WTC11 (cell line): ENCODE measurements at regions of chr10 and their contacts with region 1.

Region 1: GRCh38 chr10:6920072-6921019 is 340.3 kb upstream of the PRKCQ start:
- DNase-seq: peak; percentile 83
- ATAC-seq: peak; percentile 99
- H3K4me3 Mint-ChIP-seq: no peak overlapping the region
- H3K27ac Mint-ChIP-seq: no peak overlapping the region
- H3K4me1 Mint-ChIP-seq: peaks cover 15% of the 10 kb centered on the region
- H3K27me3 Mint-ChIP-seq: peaks cover 4% of the 10 kb centered on the region; the same call in 1 of the 2 replicates
- CTCF ChIP-seq: peak; percentile 42

Region 2: GRCh38 chr10:6748978-6749635 is 171.2 kb before region 1 on chr10:
- CTCF ChIA-PET with region 1: no interaction called
- POLR2A ChIA-PET with region 1: no interaction called
- DNase-seq: no peak
- ATAC-seq: no peak
- H3K4me3 Mint-ChIP-seq: no peak overlapping the region
- H3K27ac Mint-ChIP-seq: no peak overlapping the region
- H3K4me1 Mint-ChIP-seq: peaks cover 22% of the 10 kb centered on the region
- H3K27me3 Mint-ChIP-seq: peaks cover 15% of the 10 kb centered on the region
- CTCF ChIP-seq: no peak

Region 3: DNA sequence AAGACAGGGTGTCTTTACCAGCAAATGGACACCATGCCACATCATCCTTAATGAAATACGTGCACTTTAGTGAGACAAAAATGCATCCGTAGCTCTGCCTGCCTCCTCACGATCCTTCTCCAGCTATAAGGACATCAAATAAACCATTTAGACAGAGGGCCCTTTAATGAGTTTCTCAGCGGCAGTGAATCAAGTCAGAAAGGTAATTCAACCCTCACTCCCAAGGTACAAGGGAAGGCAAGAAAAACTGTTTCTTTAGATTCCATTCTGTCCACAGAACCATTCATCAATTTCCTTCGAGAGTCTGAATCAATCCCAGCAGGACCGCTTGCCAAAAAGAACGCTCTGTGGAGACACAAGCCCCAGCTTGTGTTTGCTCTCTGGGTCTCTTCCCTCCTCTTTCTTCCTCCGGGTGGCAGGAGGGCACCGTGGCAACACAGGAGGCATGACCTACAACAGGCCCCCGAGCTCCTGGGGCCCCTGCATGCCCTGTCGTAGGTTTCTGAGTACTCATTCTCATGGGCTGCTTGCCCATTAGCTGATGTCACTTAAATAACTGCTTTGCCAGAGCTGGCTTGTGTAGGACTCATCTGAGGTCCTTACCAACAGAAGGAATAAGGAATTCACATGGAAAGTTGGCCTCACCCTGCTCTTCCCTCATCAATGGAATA is 42.5 kb before region 1 on chr10:
- CTCF ChIA-PET with region 1: interaction called, 10 read pairs
- POLR2A ChIA-PET with region 1: no interaction called
- DNase-seq: peak; percentile 42
- ATAC-seq: peak; percentile 89
- H3K4me3 Mint-ChIP-seq: no peak overlapping the region
- H3K27ac Mint-ChIP-seq: no peak overlapping the region
- H3K4me1 Mint-ChIP-seq: peaks cover 45% of the 10 kb centered on the region
- H3K27me3 Mint-ChIP-seq: no peaks in the 10 kb centered on the region
- CTCF ChIP-seq: no peak

Region 4: DNA sequence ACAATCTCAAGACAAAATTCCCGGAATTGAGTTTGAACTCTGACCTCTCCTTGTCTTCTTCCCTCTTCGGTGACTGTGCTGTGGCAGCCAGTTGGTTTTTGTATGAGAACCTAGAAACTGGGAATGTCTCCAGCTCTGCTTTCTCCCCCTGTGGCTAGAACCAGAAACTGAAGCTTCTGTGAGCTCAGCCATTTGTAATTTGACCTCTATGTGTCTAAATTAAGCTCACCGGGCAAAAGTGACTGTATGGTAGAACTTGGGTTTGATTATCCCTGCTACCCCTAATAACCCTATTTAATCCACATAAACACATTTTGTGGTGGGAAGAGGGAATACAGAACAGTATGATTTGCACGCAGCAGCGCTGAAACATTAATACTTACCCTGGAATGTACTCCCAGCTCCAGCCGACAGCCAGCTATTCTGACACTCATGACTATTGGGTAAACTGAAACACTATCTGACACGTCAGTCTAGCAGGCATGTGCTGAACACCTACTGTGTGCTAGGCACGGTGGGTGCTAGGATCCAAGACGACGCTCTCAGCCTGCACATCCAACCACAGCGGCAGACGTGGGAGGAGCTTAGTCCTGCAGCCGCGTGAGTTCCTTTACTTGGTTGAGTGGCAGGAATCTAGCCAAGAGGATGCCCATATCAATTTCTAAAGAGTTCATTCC is 165.7 kb after region 1 on chr10:
- CTCF ChIA-PET with region 1: interaction called, 14 read pairs
- POLR2A ChIA-PET with region 1: no interaction called
- DNase-seq: peak; percentile 20
- ATAC-seq: peak; percentile 86
- H3K4me3 Mint-ChIP-seq: no peak overlapping the region
- H3K27ac Mint-ChIP-seq: peak overlapping the region; percentile 42
- H3K4me1 Mint-ChIP-seq: peaks cover 49% of the 10 kb centered on the region
- H3K27me3 Mint-ChIP-seq: peaks cover 10% of the 10 kb centered on the region
- CTCF ChIP-seq: no peak

Region 5: DNA sequence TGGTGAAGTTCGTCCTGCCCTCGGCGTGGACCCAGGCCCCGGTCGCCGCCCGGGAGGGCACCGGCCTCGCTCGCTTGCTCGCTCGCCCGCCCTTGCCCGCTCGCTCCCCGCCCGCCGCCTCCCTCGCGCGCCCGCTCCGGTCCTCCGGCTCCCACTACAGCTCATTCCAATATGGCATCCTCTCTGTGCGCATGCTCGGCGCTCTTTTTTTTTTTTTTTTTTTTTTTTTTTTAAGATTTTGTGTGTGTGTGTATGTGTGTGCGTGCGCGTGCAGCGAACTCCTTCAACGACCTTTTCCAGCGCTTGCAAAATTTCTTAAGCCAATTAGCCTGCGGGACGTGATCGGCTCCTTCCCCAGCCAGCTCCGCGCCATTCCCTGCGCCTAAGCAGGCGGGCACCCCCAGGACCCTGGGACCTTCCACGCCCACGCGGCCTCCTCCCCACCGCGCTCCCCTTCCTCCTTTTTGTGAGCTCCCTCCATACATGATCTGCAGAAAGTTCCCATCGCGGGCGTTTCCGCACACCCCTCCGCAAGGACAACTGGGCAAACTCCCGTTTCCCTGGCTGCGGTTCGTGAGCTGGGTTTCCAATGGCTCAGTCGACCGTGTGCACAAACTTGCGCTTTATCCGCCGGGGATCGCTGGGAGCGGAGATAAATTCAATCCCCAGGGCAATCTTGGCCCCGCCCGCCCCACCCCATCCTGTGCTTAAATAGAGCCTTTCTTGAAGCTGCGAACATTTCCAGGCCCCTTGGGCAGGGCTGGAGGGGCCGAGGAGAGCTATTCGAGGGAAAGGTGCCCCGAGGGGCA is 490.7 kb after region 1 on chr10 and contains the start of gene SFMBT2:
- CTCF ChIA-PET with region 1: interaction called, 26 read pairs
- POLR2A ChIA-PET with region 1: no interaction called
- DNase-seq: peak; percentile 77
- ATAC-seq: peak; percentile 16
- H3K4me3 Mint-ChIP-seq: peak within 1 kb of the TSS; percentile 92
- H3K27ac Mint-ChIP-seq: peak within 1 kb of the TSS; percentile 30; the same call in 1 of the 2 replicates
- H3K4me1 Mint-ChIP-seq: peaks cover 22% of the 10 kb centered on the region
- H3K27me3 Mint-ChIP-seq: peaks cover 80% of the 10 kb centered on the region
- CTCF ChIP-seq: no peak
- total RNA-seq, gene SFMBT2: 10.9 to 14.3 TPM (median 12.0 TPM) in 3 replicates